Activated CD4-positive, alpha-beta T cell treated with anti-CD3 and anti-CD28 coated beads, Interleukin-2, amount 10 ng/mL, durations not matched to agents 7 days and 5 days (primary cell): ENCODE measurements at regions of chr6 and their contacts with region 1.

Region 1: DNA sequence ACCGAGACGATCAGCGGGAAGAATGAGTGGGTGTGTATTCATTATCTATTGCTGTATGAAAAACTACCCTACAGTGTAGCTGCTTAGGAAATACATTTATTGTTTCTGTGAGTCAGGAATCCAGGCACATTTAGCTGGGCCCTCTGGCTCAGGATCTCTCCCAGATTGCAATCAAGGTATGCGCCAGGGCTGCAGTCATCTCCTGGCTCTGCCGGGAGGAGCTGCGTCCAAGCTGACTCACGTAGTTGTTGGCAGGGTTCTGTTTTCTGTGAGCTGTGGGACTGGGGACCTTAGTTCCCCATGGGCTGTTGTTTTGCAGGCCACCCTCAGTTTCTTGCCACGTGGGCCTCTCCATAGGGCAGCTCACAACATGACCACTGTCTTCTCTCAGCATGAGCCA is 68.2 kb upstream of the FUCA2 start:
- DNase-seq: no peak
- H3K4me3 Mint-ChIP-seq: no peak overlapping the region
- H3K27ac Mint-ChIP-seq: no peak overlapping the region
- H3K4me1 Mint-ChIP-seq: peaks cover 10% of the 10 kb centered on the region
- H3K27me3 Mint-ChIP-seq: no peaks in the 10 kb centered on the region

Region 2: DNA sequence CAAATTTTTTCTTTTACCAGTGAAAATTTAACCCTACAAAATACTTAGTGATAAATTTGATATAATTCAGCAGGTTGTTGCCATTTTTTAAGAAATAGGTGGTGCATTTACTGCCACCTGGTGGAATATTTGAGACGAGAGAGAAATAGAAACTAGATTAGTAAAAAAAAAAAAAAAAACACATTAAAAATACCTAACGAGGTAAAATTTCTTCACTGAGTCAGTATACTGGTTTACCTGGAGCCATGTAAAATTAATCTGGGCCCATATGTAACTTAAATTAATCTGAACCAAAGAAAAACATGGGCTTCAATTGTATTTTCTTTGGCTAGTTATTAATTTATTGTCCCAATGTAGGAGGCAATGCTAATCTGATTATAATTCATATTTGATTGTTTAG is 1634.9 kb after region 1 on chr6:
- CTCF ChIA-PET with region 1: no interaction called
- POLR2A ChIA-PET with region 1: interaction called, 10 read pairs
- DNase-seq: peak; percentile 27
- H3K4me3 Mint-ChIP-seq: no peak overlapping the region
- H3K27ac Mint-ChIP-seq: no peak overlapping the region
- H3K4me1 Mint-ChIP-seq: peaks cover 7% of the 10 kb centered on the region
- H3K27me3 Mint-ChIP-seq: peaks cover 6% of the 10 kb centered on the region